ENCODE measurements at regions of chr17 and their contacts with region 1.

Region 1: GRCh38 chr17:68759343-68760132 is 158.4 kb upstream of the FAM20A start:
- DNase-seq: peak; percentile 67
- H3K4me3 ChIP-seq: no peak overlapping the region
- H3K27ac ChIP-seq: no peak overlapping the region
- H3K4me1 ChIP-seq: no peaks in the 10 kb centered on the region
- CTCF ChIP-seq: peak; percentile 87

Region 2: GRCh38 chr17:68172461-68172954 is 587.0 kb before region 1 on chr17:
- CTCF ChIA-PET with region 1: no interaction called
- POLR2A ChIA-PET with region 1: no interaction called
- intact Hi-C with region 1: loop called (anchors 10 kb)
- DNase-seq: peak; percentile 85
- H3K4me3 ChIP-seq: no peak overlapping the region
- H3K27ac ChIP-seq: no peak overlapping the region
- H3K4me1 ChIP-seq: peaks cover 20% of the 10 kb centered on the region
- CTCF ChIP-seq: peak; percentile 100

Region 3: GRCh38 chr17:68468334-68468733 is 291.2 kb before region 1 on chr17:
- CTCF ChIA-PET with region 1: no interaction called
- POLR2A ChIA-PET with region 1: no interaction called
- intact Hi-C with region 1: loop called (anchors 5 kb)
- DNase-seq: no peak
- H3K4me3 ChIP-seq: no peak overlapping the region
- H3K27ac ChIP-seq: no peak overlapping the region
- H3K4me1 ChIP-seq: peaks cover 15% of the 10 kb centered on the region
- CTCF ChIP-seq: no peak

Region 4: DNA sequence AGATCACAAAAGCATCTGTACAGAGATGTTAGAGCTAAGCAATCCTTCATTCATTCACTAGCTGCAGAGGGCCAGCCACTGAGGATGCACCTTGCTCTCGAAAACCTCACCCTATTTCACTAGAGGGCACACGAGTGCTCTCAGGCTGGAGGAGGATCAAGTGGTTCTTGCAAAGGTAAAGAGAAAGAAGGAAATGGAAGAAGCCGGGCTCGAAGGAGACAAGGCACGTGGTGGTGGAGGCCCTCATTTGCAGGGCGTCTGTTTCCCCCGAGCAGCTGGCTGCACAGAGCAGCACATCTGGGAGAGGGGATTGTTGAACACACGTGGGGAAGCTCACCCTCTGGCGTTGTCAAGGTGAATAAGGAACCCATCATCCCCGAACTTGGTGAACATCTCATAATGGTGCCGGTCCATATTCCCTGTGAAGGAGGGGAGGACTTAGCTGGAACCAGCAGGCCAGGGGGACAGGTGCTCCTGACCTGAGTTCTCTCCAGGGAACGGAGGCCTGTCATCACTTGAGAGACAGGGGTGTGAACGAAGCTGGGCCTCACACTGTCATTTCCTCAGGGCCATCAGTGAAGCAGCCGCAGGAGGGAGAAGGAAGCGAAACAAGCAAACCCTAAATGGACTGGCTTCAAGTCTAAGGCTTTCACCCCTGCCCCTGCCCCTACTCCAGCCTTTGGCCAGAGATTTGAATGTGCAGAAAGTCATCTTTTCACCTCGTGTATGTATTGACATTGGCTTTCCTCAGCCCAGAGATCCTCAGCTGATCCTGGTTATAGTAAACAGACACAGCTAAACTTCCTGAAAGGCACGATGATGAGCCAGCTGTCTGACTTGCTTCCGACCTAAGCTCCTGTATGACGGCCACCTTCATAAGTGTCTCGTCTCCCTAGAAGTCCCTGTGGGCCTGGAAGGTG is 219.7 kb before region 1 on chr17:
- CTCF ChIA-PET with region 1: no interaction called
- POLR2A ChIA-PET with region 1: no interaction called
- intact Hi-C with region 1: loop called (anchors 2 kb)
- DNase-seq: peak; percentile 81
- H3K4me3 ChIP-seq: no peak overlapping the region
- H3K27ac ChIP-seq: peak overlapping the region; percentile 33
- H3K4me1 ChIP-seq: peaks cover 18% of the 10 kb centered on the region
- CTCF ChIP-seq: peak; percentile 86